MCF 10A (cell line): ENCODE measurements at regions of chr17 and their contacts with region 1.

Region 1: DNA sequence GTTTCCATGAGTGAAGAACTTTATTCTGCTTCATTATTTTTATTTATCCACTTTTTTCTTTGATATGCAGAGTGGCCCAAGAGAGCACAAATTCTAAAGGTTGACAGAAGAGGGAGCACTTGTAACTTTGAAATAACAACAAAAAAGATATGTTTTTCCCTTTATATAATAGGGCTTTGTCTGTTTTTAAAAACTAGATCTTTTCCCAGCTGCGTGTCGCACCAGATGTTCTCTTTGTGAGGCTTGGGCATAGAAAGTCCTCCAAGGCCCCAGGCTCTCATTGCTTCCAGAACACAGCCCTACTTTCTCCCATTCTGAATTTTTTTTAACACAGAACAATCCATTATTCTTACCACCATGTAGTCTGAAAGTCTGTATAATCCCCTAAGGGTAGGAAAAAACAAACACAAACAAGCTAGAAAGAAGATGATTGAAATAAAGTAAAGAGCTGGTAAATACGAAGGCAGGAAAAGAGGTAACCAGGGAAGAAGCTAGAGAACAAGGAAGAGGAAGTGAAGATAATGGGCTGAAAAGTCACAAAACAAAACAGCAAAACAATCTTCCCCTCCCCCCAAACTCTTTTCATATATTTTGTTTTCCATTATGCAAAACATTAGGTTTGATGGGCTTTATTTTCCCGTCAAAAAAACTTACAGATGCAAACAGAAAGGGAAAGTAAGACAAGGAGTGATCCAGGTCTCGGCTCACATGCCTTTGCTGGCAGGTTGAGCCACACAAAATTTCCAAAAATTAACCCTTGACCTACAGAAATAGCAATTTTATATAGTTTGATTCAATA is 160.4 kb downstream of the ABCA8 start:
- DNase-seq: peak; percentile 26
- H3K4me3 Mint-ChIP-seq: no peak overlapping the region
- H3K27ac Mint-ChIP-seq: peak overlapping the region; percentile 40
- H3K4me1 Mint-ChIP-seq: peaks cover 20% of the 10 kb centered on the region
- H3K27me3 Mint-ChIP-seq: no peaks in the 10 kb centered on the region
- CTCF ChIP-seq: peak; percentile 37

Region 2: DNA sequence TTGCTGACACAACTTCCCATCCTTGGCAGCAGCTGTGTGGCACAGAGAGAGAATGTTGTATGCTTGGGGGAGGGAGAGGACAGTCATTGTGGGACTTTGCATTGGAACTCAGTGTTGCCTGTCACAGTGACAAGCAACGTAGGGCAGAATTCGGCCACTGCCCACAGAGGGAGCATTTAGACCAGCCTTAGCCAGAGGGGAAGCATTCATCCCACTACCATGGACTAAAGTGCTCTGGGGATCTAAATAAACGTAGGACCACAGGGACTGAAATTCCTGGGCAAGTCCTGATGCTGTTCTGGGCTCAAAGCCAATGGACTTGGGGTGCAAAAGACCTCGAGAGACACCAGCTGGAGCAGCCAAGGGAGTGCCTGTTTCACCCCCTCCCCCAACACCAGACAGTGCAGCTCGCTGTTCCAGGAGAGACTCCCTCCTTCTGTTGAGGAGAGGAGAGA is 115.4 kb after region 1 on chr17:
- CTCF ChIA-PET with region 1: interaction called, 4 read pairs
- POLR2A ChIA-PET with region 1: interaction called, 5 read pairs
- intact Hi-C with region 1: loop called (anchors 1 kb)
- DNase-seq: peak; percentile 23
- H3K4me3 Mint-ChIP-seq: no peak overlapping the region
- H3K27ac Mint-ChIP-seq: peak overlapping the region; percentile 96
- H3K4me1 Mint-ChIP-seq: peaks cover 12% of the 10 kb centered on the region
- H3K27me3 Mint-ChIP-seq: no peaks in the 10 kb centered on the region
- CTCF ChIP-seq: no peak

Region 3: DNA sequence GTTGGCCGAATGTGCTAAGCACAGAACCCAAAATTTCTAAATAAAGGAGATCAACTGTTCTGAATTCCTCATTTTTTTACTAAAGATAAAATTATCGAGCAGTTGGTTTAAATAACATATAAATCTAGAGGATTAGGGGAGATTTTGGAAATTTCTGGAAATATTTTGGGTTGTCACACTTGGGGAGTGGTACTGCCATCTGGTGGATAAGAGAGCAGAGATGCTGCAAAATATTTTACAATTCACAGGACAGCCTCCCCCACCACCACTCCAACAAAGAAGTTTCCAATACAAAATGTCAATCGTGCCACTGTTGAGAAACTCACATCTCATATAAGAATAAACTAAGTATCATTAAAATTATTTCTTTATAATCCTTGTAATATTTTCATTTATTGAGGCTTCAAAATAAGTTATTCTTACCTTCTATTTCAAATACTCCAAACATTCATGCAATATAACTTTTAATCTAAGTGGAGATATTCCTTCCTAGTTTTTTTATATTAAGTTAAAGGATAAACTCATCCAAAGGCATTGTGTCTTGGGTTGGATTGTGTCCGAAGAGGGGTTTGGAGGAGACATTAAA is 177.4 kb after region 1 on chr17:
- CTCF ChIA-PET with region 1: interaction called, 29 read pairs
- POLR2A ChIA-PET with region 1: interaction called, 3 read pairs
- intact Hi-C with region 1: loop called (anchors 1 kb)
- DNase-seq: peak; percentile 48
- H3K4me3 Mint-ChIP-seq: no peak overlapping the region
- H3K27ac Mint-ChIP-seq: no peak overlapping the region
- H3K4me1 Mint-ChIP-seq: no peaks in the 10 kb centered on the region
- H3K27me3 Mint-ChIP-seq: no peaks in the 10 kb centered on the region
- CTCF ChIP-seq: peak; percentile 63